Vagina (tissue), 2 donors: ENCODE measurements at regions of chr1 and their contacts with region 1.

Region 1: GRCh38 chr1:221958156-221958562 is 216.3 kb upstream of the DUSP10 start:
- DNase-seq: no peak
- H3K4me3 ChIP-seq: no peak overlapping the region
- H3K27ac ChIP-seq: no peak overlapping the region
- H3K4me1 ChIP-seq: no peaks in the 10 kb centered on the region
- H3K27me3 ChIP-seq: no peaks in the 10 kb centered on the region
- CTCF ChIP-seq: no peak
- POLR2A ChIP-seq: no peak

Region 2: DNA sequence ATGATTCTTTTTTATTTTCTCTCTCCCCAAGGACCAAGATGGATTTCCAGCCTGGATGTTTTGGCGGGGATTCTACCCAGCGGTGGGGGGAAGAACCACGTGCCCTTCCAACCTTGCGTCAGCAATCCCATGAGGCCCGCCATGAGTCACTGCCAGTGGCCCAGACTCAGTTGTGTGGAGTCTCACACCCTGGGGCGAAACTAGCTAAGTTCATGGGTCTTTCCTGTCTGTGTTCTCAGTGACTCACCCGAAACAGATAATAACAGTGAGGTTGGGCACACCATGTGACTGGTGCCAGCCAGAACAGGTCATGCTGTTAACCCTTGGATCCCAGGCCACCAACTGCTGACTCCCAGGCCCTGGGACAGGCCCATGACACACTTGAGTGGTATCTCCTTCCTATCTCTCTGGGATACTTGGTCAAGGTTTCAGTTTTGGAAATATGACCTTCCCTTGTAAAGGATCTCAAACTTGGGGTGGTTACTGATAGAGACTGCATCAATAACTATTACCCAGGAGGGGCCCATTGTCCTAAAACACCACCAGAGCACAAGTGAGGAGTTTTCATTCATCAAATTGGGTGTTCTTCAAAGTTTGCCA is 118.3 kb before region 1 on chr1:
- intact Hi-C with region 1: loop called (anchors 5 kb)
- DNase-seq: no peak
- H3K4me3 ChIP-seq: no peak overlapping the region
- H3K27ac ChIP-seq: peak overlapping the region; percentile 1
- H3K4me1 ChIP-seq: peaks cover 28% of the 10 kb centered on the region
- H3K27me3 ChIP-seq: no peaks in the 10 kb centered on the region
- CTCF ChIP-seq: no peak
- POLR2A ChIP-seq: no peak